Psoas muscle (tissue), 8 donors: ENCODE measurements at regions of chr11 and their contacts with region 1.

Region 1: GRCh38 chr11:122655527-122656072 is at the start of gene UBASH3B:
- DNase-seq: peak; percentile 69 to 83
- ATAC-seq: peak; percentile 87 to 91 (median 90)
- H3K4me3 ChIP-seq: peak within 1 kb of the TSS; percentile 91
- H3K27ac ChIP-seq: peak within 1 kb of the TSS; percentile 80
- H3K4me1 ChIP-seq: peaks cover 4% of the 10 kb centered on the region
- H3K27me3 ChIP-seq: no peaks in the 10 kb centered on the region
- CTCF ChIP-seq: peak; percentile 12
- total RNA-seq, gene UBASH3B: 2.1 to 12.6 (median 8.6) TPM

Region 2: GRCh38 chr11:122578168-122578825 is 77.3 kb before region 1 on chr11:
- intact Hi-C with region 1: no loop called
- DNase-seq: no peak
- ATAC-seq: no peak
- H3K4me3 ChIP-seq: no peak overlapping the region
- H3K27ac ChIP-seq: no peak overlapping the region
- H3K4me1 ChIP-seq: no peaks in the 10 kb centered on the region
- H3K27me3 ChIP-seq: no peaks in the 10 kb centered on the region
- CTCF ChIP-seq: no peak

Region 3: GRCh38 chr11:123054301-123055065 is 398.9 kb after region 1 on chr11:
- intact Hi-C with region 1: loop called in 1 of 2 experiments (anchors 10 kb)
- DNase-seq: no peak
- ATAC-seq: peak; percentile 72 to 87 (median 80)
- H3K4me3 ChIP-seq: no peak overlapping the region
- H3K27ac ChIP-seq: no peak overlapping the region
- H3K4me1 ChIP-seq: peaks cover 39% of the 10 kb centered on the region
- H3K27me3 ChIP-seq: no peaks in the 10 kb centered on the region
- CTCF ChIP-seq: peak; percentile 71